ENCODE measurements at regions of chr5 and their contacts with region 1.

Region 1: GRCh38 chr5:132820162-132820754 is 7.2 kb downstream of the SOWAHA start:
- DNase-seq: peak; percentile 92 to 94 (median 93)
- ATAC-seq: peak; percentile 88 to 94 (median 92)
- H3K4me3 ChIP-seq: no peak overlapping the region
- H3K27ac ChIP-seq: peak overlapping the region in 2 of 3 donors; percentile 11 to 40
- H3K4me1 ChIP-seq: peaks cover 0 to 12% (median 0%) of the 10 kb centered on the region in 4 donors
- H3K27me3 ChIP-seq: no peaks in the 10 kb centered on the region
- CTCF ChIP-seq: peak; percentile 93 to 96 (median 96)
- POLR2A ChIP-seq: peak; percentile 7

Region 2: DNA sequence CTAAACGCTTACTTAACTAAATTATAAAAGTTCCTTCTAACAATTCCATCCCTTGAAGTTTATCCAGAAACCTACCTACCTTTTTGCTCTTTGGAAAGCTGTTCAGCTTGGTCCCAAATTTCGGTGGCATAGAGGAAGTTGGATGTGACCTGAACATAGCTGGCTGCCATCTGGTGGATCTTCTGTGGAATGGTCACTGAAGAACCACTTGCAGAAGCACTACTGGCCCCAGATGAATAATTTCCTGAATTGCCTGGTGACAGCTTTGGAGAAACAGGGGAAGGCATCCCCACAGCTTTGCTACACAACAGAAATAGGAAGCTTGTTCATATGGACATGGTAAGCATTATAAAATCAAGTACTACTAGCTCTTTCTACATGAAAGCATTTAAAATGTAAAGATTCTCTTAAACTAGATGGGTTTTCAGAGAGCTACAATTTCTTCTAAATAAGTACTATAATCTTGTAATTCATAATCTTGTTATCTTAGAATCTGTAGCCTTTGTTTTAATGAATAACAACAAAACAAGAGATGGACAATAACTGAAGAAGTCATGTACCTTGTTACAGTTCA is 63.1 kb after region 1 on chr5:
- intact Hi-C with region 1: loop called in 1 of 2 experiments (anchors 10 kb)
- DNase-seq: peak in 1 of 3 donors; percentile 58
- ATAC-seq: peak; percentile 77 to 87 (median 86)
- H3K4me3 ChIP-seq: no peak overlapping the region
- H3K27ac ChIP-seq: no peak overlapping the region
- H3K4me1 ChIP-seq: no peaks in the 10 kb centered on the region
- H3K27me3 ChIP-seq: no peaks in the 10 kb centered on the region
- CTCF ChIP-seq: peak; percentile 50 to 75 (median 58)
- POLR2A ChIP-seq: no peak

Region 3: GRCh38 chr5:132971478-132972435 is 151.5 kb after region 1 on chr5:
- intact Hi-C with region 1: no loop called
- DNase-seq: no peak
- ATAC-seq: no peak
- H3K4me3 ChIP-seq: no peak overlapping the region
- H3K27ac ChIP-seq: no peak overlapping the region
- H3K4me1 ChIP-seq: no peaks in the 10 kb centered on the region
- H3K27me3 ChIP-seq: no peaks in the 10 kb centered on the region
- CTCF ChIP-seq: no peak
- POLR2A ChIP-seq: no peak